Activated B cell treated with CpG ODN at 0.5 μM for 24 hours (primary cell): ENCODE measurements at regions of chr6 and their contacts with region 1.

Region 1: GRCh38 chr6:148835920-148836441 is 89.2 kb downstream of the UST start:
- DNase-seq: no peak
- ATAC-seq: peak; percentile 69
- H3K4me3 Mint-ChIP-seq: peak overlapping the region; percentile 74
- H3K27ac Mint-ChIP-seq: peak overlapping the region; percentile 84
- H3K4me1 Mint-ChIP-seq: peaks cover 41% of the 10 kb centered on the region
- H3K27me3 Mint-ChIP-seq: no peaks in the 10 kb centered on the region
- CTCF ChIP-seq: no peak

Region 2: DNA sequence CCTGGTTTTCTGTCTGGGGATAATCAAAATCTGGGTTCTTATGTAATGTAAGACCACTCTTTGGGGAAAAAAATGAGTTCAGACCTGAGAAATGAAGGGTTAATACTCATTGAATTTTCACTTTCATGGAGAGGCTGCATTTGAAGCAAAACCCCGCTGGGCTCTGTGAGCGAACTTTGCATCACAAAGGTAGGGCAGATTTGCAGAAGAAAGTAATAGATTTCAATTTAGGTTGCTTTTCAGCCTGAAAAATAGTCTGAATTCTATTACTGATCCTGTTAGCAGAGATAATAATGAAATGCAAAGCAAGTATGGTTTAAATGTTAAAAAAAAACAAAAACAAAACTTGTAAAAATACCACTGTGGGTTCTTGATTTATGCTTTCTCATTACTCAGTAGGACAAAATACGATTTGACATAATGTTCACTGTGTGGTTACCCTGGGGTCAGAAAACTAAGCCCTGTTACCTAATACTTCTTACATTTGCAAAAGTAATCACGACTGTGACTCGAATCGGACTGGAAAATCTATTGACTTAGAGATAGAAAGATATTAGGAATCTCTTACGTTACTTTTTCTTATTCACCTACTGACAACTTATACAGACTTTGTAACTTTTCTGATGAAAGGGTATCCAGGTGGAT is 16.9 kb before region 1 on chr6:
- CTCF ChIA-PET with region 1: interaction called, 3 read pairs
- POLR2A ChIA-PET with region 1: interaction called, 3 read pairs
- intact Hi-C with region 1: loop called (anchors 2 kb)
- DNase-seq: no peak
- ATAC-seq: no peak
- H3K4me3 Mint-ChIP-seq: no peak overlapping the region
- H3K27ac Mint-ChIP-seq: no peak overlapping the region
- H3K4me1 Mint-ChIP-seq: peaks cover 30% of the 10 kb centered on the region
- H3K27me3 Mint-ChIP-seq: no peaks in the 10 kb centered on the region
- CTCF ChIP-seq: no peak

Region 3: GRCh38 chr6:148848915-148849314 is 12.9 kb after region 1 on chr6:
- CTCF ChIA-PET with region 1: no interaction called
- POLR2A ChIA-PET with region 1: no interaction called
- intact Hi-C with region 1: loop called (anchors 2 kb)
- DNase-seq: no peak
- ATAC-seq: no peak
- H3K4me3 Mint-ChIP-seq: no peak overlapping the region
- H3K27ac Mint-ChIP-seq: no peak overlapping the region
- H3K4me1 Mint-ChIP-seq: peaks cover 61% of the 10 kb centered on the region
- H3K27me3 Mint-ChIP-seq: no peaks in the 10 kb centered on the region
- CTCF ChIP-seq: no peak

Region 4: GRCh38 chr6:148915810-148916209 is 79.8 kb after region 1 on chr6:
- CTCF ChIA-PET with region 1: no interaction called
- POLR2A ChIA-PET with region 1: no interaction called
- intact Hi-C with region 1: no loop called
- DNase-seq: no peak
- ATAC-seq: no peak
- H3K4me3 Mint-ChIP-seq: no peak overlapping the region
- H3K27ac Mint-ChIP-seq: no peak overlapping the region
- H3K4me1 Mint-ChIP-seq: peaks cover 9% of the 10 kb centered on the region
- H3K27me3 Mint-ChIP-seq: no peaks in the 10 kb centered on the region
- CTCF ChIP-seq: no peak

Region 5: DNA sequence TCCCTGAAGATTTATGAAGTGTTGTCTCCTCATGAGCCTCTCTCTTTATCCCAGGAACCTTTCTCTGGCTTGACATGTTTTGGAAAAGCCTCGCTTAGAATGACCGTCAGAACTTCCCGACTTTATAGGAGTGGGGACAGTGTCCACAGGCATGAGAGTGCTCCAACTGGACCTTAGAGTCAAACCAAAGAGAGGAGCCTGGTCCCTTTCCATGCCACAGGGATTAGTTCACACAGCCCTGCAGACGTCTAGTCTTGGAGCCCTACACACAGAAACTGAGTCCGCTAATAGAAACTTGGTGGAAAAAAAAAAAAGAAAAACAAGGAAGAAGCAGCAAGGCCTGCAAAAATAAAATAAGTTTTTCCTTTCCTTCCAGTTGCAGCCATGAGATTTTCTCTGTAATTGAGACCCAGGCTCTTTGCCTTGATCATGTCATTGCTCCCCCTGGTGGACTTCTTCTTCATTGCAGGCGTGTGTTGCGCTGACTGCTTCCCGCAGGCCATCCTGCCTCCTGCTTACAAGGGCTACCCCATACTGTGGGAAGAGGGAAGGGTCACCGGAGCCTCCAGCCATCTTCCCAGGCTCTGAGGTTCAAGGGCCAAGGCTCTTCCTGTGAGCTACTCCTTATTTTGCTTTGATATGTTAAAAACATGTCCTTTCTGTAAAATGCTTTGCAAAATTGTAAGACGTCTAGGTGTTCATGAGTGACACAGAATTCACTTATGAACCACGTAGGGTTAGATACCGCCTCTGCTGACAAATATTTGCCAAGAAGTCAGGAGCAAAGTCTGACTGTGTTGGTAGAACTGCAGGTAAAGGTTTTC is 111.9 kb after region 1 on chr6:
- CTCF ChIA-PET with region 1: no interaction called
- POLR2A ChIA-PET with region 1: no interaction called
- intact Hi-C with region 1: loop called (anchors 5 kb)
- DNase-seq: peak; percentile 61
- ATAC-seq: peak; percentile 96
- H3K4me3 Mint-ChIP-seq: no peak overlapping the region
- H3K27ac Mint-ChIP-seq: no peak overlapping the region
- H3K4me1 Mint-ChIP-seq: peaks cover 12% of the 10 kb centered on the region
- H3K27me3 Mint-ChIP-seq: no peaks in the 10 kb centered on the region
- CTCF ChIP-seq: peak; percentile 84